Activated naive CD4-positive, alpha-beta T cell treated with anti-CD3 and anti-CD28 coated beads for 36 hours (primary cell): ENCODE measurements at regions of chr6 and their contacts with region 1.

Region 1: GRCh38 chr6:87832025-87832825 is 130.2 kb upstream of the AKIRIN2 start:
- DNase-seq: no peak
- H3K4me3 Mint-ChIP-seq: peak overlapping the region; percentile 69
- H3K27ac Mint-ChIP-seq: peak overlapping the region; percentile 72
- H3K4me1 Mint-ChIP-seq: peaks cover 8% of the 10 kb centered on the region
- H3K27me3 Mint-ChIP-seq: no peaks in the 10 kb centered on the region

Region 2: DNA sequence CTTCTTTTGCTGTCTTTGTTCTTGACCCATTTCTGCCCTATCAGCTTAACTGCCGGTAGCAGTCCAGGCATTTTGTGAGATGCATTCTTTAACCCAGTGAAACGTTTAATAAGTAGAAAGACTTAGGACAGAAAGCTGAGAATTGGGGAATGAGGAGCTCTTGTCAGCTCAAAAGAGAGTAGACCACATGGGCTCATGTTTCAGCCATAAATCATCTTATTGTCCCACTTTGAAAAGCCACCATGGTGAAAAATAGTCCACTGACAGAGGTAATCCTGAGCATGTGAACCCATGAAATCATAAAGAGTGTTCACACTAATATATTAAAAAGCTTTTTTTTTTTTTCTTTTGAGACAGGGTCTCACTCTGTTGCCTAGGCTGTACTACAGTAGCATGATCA is 226.0 kb before region 1 on chr6:
- CTCF ChIA-PET with region 1: no interaction called
- intact Hi-C with region 1: no loop called
- DNase-seq: no peak
- H3K4me3 Mint-ChIP-seq: no peak overlapping the region
- H3K27ac Mint-ChIP-seq: no peak overlapping the region
- H3K4me1 Mint-ChIP-seq: no peaks in the 10 kb centered on the region
- H3K27me3 Mint-ChIP-seq: no peaks in the 10 kb centered on the region

Region 3: DNA sequence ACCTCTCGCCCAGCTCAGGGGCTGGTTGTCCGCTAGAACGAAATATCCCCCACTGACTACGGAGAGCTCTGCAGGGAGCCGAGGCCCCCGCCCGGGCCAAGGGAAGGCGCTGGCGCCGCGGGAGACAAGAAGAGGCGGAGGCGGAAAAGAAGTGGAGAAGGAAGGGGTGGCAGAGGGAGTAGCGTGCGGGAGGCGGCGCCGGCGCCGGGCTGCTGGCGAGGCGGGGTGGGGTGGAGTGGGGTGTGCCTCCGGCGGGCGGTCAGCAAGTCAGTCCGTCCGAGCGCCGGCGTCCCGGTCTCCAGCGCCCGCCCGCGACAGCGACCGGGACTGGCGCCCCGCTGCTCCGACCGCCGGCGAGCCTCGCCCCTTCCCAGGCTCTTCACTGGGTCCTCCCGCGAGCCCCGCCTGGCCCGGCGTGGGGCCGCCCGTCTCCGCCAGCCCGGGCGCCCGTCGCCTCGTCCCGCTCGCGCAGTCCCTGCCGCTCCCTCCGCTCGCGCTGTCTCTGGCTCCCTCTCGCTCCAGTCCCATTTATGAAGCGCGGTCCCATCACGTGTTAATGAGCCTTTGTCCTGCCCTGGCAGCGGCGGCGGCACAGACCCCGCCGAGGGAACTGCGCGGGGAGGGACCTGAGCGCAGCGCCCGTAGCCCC is 333.7 kb after region 1 on chr6 and contains the start of gene CNR1:
- CTCF ChIA-PET with region 1: no interaction called
- intact Hi-C with region 1: loop called (anchors 5 kb)
- DNase-seq: no peak
- H3K4me3 Mint-ChIP-seq: peak within 1 kb of the TSS; percentile 74
- H3K27ac Mint-ChIP-seq: no peak within 1 kb of the TSS
- H3K4me1 Mint-ChIP-seq: peaks cover 12% of the 10 kb centered on the region
- H3K27me3 Mint-ChIP-seq: peaks cover 55% of the 10 kb centered on the region
- total RNA-seq, gene CNR1: not detected

Region 4: DNA sequence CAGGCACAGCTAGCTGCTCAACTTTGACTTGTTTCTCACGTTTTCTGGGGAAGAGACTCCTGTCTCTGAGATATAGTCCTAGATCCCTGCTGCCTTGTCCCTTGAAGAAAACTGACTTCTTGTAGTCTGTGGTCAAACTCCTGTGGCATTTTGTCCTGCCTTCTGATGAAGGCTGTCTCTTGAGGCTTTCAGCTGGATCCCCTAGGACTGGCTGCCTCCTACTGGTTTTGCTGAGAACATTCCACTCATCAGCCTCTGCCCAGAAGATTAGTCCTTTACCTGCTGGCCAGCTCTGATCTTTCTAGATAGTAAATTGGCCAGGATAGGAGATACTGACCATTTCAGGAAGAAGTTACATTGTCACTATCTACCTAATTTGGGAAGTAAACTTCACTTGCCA is 405.8 kb after region 1 on chr6:
- CTCF ChIA-PET with region 1: no interaction called
- intact Hi-C with region 1: loop called (anchors 5 kb)
- DNase-seq: peak; percentile 4
- H3K4me3 Mint-ChIP-seq: no peak overlapping the region
- H3K27ac Mint-ChIP-seq: no peak overlapping the region
- H3K4me1 Mint-ChIP-seq: no peaks in the 10 kb centered on the region
- H3K27me3 Mint-ChIP-seq: peaks cover 2% of the 10 kb centered on the region